ENCODE measurements at regions of chr16 and their contacts with region 1.

Region 1: GRCh38 chr16:26795184-26795583 is 271.5 kb upstream of the C16orf82 start:
- DNase-seq: no peak
- ATAC-seq: no peak
- H3K4me3 ChIP-seq: no peak overlapping the region
- H3K27ac ChIP-seq: no peak overlapping the region
- H3K4me1 ChIP-seq: no peaks in the 10 kb centered on the region
- H3K27me3 ChIP-seq: no peaks in the 10 kb centered on the region
- CTCF ChIP-seq: no peak
- POLR2A ChIP-seq: no peak
- RAD21 ChIP-seq: no peak

Region 2: DNA sequence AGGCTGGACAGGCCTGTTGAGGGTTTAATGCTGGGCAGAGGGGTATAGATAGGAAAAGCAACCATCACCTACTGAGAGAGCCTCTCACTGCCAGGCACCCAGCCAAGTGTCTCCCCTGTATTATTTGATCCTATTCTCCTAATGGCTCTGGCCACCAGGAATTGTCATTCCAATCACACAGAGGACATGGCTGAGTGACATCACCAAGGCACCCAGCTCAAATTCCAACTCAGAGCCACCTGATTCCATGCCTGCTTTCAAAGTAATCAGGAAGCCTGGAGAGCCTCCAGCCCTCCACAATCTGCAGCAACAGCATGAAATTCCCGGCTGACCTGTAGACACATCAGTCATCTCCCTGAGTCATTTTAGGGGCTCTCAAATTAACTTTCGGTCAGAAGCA is 97.4 kb before region 1 on chr16:
- CTCF ChIA-PET with region 1: no interaction called
- POLR2A ChIA-PET with region 1: no interaction called
- dilution Hi-C with region 1: no loop called
- in situ Hi-C with region 1: loop called (anchors 25 kb)
- intact Hi-C with region 1: no loop called
- DNase-seq: no peak
- ATAC-seq: no peak
- H3K4me3 ChIP-seq: no peak overlapping the region
- H3K27ac ChIP-seq: no peak overlapping the region
- H3K4me1 ChIP-seq: no peaks in the 10 kb centered on the region
- H3K27me3 ChIP-seq: no peaks in the 10 kb centered on the region
- CTCF ChIP-seq: no peak
- POLR2A ChIP-seq: no peak
- RAD21 ChIP-seq: no peak